Breast epithelium (tissue), 4 donors: ENCODE measurements at regions of chr2 and their contacts with region 1.

Region 1: GRCh38 chr2:211396815-211397214 is 840.4 kb downstream of the CPS1 start:
- DNase-seq: no peak
- H3K4me3 ChIP-seq: no peak overlapping the region
- H3K27ac ChIP-seq: no peak overlapping the region
- H3K4me1 ChIP-seq: no peaks in the 10 kb centered on the region
- H3K27me3 ChIP-seq: no peaks in the 10 kb centered on the region
- CTCF ChIP-seq: no peak
- POLR2A ChIP-seq: no peak

Region 2: GRCh38 chr2:211237586-211238275 is 159.1 kb before region 1 on chr2:
- intact Hi-C with region 1: loop called (anchors 10 kb)
- DNase-seq: no peak
- H3K4me3 ChIP-seq: no peak overlapping the region
- H3K27ac ChIP-seq: no peak overlapping the region
- H3K4me1 ChIP-seq: no peaks in the 10 kb centered on the region
- H3K27me3 ChIP-seq: no peaks in the 10 kb centered on the region
- CTCF ChIP-seq: no peak
- POLR2A ChIP-seq: no peak